PC-9 (cell line): ENCODE measurements at regions of chr3 and their contacts with region 1.

Region 1: DNA sequence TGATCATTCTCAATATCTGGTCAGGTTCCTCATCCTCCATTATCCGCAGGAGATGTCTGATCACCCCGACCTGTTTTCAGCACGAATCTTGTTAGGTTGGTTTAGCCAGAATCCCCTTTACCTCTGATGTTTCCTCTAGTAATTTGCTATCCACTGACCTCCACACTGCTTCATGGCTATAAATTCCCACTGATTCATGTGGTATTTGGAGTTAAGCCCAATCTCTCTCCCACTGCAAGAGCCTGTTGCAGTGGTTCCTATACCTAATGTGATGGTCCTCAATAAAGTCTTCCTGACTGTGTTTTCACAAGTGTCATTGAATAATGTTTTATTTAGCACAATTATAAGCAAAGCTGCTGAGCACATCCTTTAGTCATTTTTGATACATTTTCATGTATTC is 124.8 kb upstream of the CNTN3 start:
- DNase-seq: no peak
- H3K4me3 ChIP-seq: no peak overlapping the region
- H3K27ac ChIP-seq: no peak overlapping the region
- H3K4me1 ChIP-seq: no peaks in the 10 kb centered on the region
- H3K27me3 ChIP-seq: no peaks in the 10 kb centered on the region
- CTCF ChIP-seq: no peak

Region 2: GRCh38 chr3:74661672-74662071 is 77.6 kb before region 1 on chr3:
- CTCF ChIA-PET with region 1: no interaction called
- POLR2A ChIA-PET with region 1: interaction called, 11 read pairs
- intact Hi-C with region 1: no loop called
- DNase-seq: no peak
- H3K4me3 ChIP-seq: no peak overlapping the region
- H3K27ac ChIP-seq: no peak overlapping the region
- H3K4me1 ChIP-seq: no peaks in the 10 kb centered on the region
- H3K27me3 ChIP-seq: no peaks in the 10 kb centered on the region
- CTCF ChIP-seq: no peak

Region 3: DNA sequence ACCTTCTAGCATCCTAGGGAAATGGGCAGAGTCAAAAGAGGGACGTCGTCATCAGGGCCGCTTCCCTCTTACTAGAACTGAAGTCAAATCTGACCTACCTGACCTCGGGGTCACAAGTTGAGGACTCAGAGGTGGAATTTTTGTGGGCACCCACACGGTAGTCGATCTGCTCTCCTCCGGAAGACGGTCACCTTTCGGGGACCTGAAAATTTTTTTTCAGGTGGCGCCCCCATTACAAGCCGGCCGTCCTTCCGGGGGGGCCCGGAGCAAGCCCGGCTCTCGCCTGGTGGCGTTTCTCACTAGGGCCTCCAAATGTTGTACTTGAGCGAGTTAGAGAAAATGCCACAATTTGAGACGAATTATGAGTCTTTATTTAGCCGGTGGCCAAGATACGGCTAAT is 767.4 kb after region 1 on chr3:
- CTCF ChIA-PET with region 1: no interaction called
- POLR2A ChIA-PET with region 1: no interaction called
- intact Hi-C with region 1: no loop called
- DNase-seq: no peak
- H3K4me3 ChIP-seq: no peak overlapping the region
- H3K27ac ChIP-seq: no peak overlapping the region
- H3K4me1 ChIP-seq: no peaks in the 10 kb centered on the region
- H3K27me3 ChIP-seq: no peaks in the 10 kb centered on the region
- CTCF ChIP-seq: no peak